Activated CD4-positive, alpha-beta memory T cell treated with anti-CD3 and anti-CD28 coated beads, Interleukin-2, amount 10 ng/mL, durations not matched to agents 7 days and 5 days (primary cell): ENCODE measurements at regions of chr10 and their contacts with region 1.

Region 1: DNA sequence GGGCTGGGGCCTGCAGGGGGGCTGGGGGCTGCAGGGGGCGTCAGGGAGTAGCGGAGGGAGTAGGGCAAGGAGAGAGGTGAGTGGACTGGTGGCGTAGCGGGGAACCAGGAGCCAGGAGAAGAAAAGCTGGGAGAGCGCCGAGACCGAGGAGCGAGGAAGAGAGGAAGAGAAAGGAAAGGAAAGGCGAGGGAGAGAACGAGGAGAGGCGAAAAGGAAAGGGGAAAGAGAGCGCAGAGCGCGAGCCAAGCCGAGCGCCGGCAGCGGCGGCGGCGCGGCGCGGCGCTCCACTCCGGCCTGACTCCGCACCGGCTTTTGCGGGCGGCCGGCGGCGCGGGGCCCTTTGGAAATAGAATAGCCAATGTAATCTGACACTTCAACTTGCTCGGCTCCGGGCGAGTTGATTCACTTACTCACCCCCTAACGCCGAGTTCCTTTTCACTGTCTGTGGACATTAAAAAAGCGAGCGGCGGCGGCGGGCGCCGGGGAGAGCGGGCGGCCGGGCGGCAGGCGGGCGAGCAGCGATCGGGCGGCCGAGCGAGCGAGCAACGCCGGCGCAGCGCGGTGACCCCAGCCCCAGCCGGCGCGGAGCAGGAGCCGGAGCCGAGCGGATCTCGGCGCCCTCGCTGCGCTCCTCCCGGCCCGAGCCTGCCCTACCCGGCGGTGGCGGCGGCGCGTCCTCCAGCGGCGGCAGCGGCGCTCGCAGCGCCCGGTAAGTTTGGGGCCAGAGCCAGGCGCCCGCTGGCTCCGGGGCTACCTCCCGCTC is at the start of gene ZMIZ1:
- DNase-seq: peak; percentile 87
- H3K4me3 Mint-ChIP-seq: peak within 1 kb of the TSS; percentile 95
- H3K27ac Mint-ChIP-seq: peak within 1 kb of the TSS; percentile 85
- H3K4me1 Mint-ChIP-seq: peaks cover 46% of the 10 kb centered on the region
- H3K27me3 Mint-ChIP-seq: peaks cover 15% of the 10 kb centered on the region
- total RNA-seq, gene ZMIZ1: 46.9 to 47.0 TPM

Region 2: DNA sequence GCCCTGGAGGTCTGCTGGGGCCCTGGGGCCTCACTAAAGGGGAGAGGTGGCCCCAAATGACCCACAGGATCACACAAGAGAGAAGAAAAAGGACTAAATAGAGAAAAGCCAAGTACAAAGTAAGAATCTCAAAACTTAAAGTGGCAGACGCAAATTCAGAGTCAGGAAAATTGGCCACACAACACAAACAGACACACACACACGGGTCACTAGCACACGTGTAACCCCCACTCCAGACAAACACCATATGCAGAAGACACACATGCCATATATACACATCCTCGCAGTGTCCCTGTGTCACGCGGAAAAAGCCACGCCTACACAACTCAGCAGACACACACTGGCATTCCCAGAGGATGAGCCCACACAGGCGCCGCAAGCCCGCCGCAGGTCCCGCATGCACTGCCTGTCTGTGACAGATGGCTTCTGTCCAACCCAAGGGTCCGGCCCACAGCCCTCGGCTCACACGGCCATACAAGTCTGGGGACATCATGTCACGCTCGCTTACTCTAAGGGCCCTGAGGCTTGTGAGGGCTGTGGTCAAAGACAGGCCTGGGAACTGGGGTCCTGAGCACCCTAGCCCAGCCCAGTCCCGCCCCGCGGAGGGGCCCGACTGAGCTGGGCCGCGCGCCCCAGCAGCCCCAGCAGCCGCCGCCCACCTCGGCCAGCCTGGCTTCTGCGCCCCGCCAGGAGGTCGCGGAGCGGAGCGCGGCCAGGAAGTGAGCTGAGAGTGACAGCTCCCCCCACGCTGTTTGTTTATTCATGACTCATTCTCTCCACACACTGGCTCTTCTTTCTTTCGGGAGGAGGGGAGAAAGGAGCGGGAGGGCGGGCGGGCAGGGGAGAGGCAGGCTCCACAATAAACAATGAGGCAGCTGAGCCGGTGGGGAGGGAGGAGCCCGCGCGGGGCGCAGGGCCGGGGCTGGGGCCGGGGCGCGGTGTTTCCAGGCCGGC is 95.5 kb before region 1 on chr10:
- CTCF ChIA-PET with region 1: interaction called, 3 read pairs
- POLR2A ChIA-PET with region 1: interaction called, 10 read pairs
- DNase-seq: peak; percentile 76
- H3K4me3 Mint-ChIP-seq: peak overlapping the region; percentile 60
- H3K27ac Mint-ChIP-seq: peak overlapping the region; percentile 61
- H3K4me1 Mint-ChIP-seq: peaks cover 21% of the 10 kb centered on the region
- H3K27me3 Mint-ChIP-seq: peaks cover 14% of the 10 kb centered on the region

Region 3: GRCh38 chr10:79093658-79094411 is 25.1 kb after region 1 on chr10:
- CTCF ChIA-PET with region 1: no interaction called
- POLR2A ChIA-PET with region 1: no interaction called
- DNase-seq: no peak
- H3K4me3 Mint-ChIP-seq: no peak overlapping the region
- H3K27ac Mint-ChIP-seq: no peak overlapping the region
- H3K4me1 Mint-ChIP-seq: peaks cover 6% of the 10 kb centered on the region
- H3K27me3 Mint-ChIP-seq: no peaks in the 10 kb centered on the region